Caco-2 (cell line): ENCODE measurements at regions of chr1 and their contacts with region 1.

Region 1: GRCh38 chr1:182120411-182121239 is 59.1 kb upstream of the ZNF648 start:
- DNase-seq: peak; percentile 47 to 51
- H3K4me3 ChIP-seq: no peak overlapping the region
- H3K4me3 Mint-ChIP-seq: no peak overlapping the region
- H3K27ac Mint-ChIP-seq: no peak overlapping the region
- H3K4me1 ChIP-seq: peaks cover 12% of the 10 kb centered on the region
- H3K4me1 Mint-ChIP-seq: peaks cover 24% of the 10 kb centered on the region
- H3K27me3 ChIP-seq: no peaks in the 10 kb centered on the region
- H3K27me3 Mint-ChIP-seq: no peaks in the 10 kb centered on the region
- CTCF ChIP-seq: no peak

Region 2: GRCh38 chr1:182041615-182042014 is 79.0 kb before region 1 on chr1:
- CTCF ChIA-PET with region 1: no interaction called
- POLR2A ChIA-PET with region 1: no interaction called
- intact Hi-C with region 1: no loop called
- DNase-seq: no peak
- H3K4me3 ChIP-seq: no peak overlapping the region
- H3K4me3 Mint-ChIP-seq: no peak overlapping the region
- H3K27ac Mint-ChIP-seq: no peak overlapping the region
- H3K4me1 ChIP-seq: no peaks in the 10 kb centered on the region
- H3K4me1 Mint-ChIP-seq: no peaks in the 10 kb centered on the region
- H3K27me3 ChIP-seq: no peaks in the 10 kb centered on the region
- H3K27me3 Mint-ChIP-seq: no peaks in the 10 kb centered on the region
- CTCF ChIP-seq: no peak

Region 3: GRCh38 chr1:182101415-182102042 is 19.1 kb before region 1 on chr1:
- CTCF ChIA-PET with region 1: no interaction called
- POLR2A ChIA-PET with region 1: no interaction called
- intact Hi-C with region 1: loop called (anchors 1 kb)
- DNase-seq: peak; percentile 93 to 97
- H3K4me3 ChIP-seq: no peak overlapping the region
- H3K4me3 Mint-ChIP-seq: peak overlapping the region; percentile 71
- H3K27ac Mint-ChIP-seq: peak overlapping the region; percentile 98
- H3K4me1 ChIP-seq: peaks cover 38% of the 10 kb centered on the region
- H3K4me1 Mint-ChIP-seq: peaks cover 47% of the 10 kb centered on the region
- H3K27me3 ChIP-seq: no peaks in the 10 kb centered on the region
- H3K27me3 Mint-ChIP-seq: no peaks in the 10 kb centered on the region
- CTCF ChIP-seq: no peak